CD8-positive, alpha-beta T cell (primary cell): ENCODE measurements at regions of chr9 and their contacts with region 1.

Region 1: DNA sequence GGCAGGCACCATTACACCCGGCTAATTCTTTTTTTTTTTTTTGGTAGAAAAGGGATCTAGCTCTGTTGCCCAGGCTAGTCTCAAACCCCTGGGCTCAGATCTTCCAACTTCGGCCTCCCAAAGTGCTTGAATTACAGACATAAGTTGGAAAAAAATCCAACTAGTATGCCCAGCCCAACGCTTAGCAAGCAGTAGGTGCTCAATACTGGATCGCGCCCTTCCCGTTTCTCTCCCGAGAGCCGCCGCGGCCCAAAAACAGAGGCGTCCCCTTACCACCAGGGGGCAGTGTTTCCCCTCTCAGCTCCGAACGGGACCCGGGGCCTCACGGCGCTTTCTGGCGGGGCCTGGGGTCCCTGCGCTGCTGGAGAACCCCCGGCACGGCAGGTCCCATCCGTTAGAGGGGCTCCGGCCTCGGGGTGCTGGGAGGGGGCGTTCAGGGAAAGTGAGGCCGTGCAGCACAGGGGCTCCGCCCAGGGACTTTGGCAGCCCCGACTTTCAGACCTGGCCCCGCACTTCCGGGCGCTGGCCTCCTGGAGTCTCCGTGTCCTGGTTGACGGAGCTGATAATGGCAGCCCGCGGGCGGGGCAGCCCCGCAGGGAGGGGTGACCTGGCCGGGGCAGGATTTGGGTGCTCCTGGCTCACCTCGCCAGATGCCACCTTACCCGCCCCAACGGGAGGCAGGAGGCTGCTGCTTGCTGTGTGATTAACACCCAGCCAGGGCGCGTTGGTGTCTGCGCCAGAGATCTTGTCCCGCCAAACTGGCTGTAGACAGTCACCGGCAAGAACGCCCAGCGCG is 15.2 kb downstream of the PTGES start:
- DNase-seq: peak; percentile 72 to 95 (median 87)
- ATAC-seq: peak; percentile 85
- H3K4me3 ChIP-seq: peak overlapping the region; percentile 72 to 92
- H3K4me3 Mint-ChIP-seq: peak overlapping the region; percentile 76
- H3K27ac ChIP-seq: peak overlapping the region; percentile 50 to 77
- H3K27ac Mint-ChIP-seq: peak overlapping the region; percentile 60
- H3K4me1 ChIP-seq: peaks cover 9% of the 10 kb centered on the region
- H3K4me1 Mint-ChIP-seq: peaks cover 6% of the 10 kb centered on the region
- H3K27me3 ChIP-seq: no peaks in the 10 kb centered on the region
- H3K27me3 Mint-ChIP-seq: peaks cover 2% of the 10 kb centered on the region
- CTCF ChIP-seq: peak; percentile 96

Region 2: GRCh38 chr9:129422843-129423192 is 314.9 kb before region 1 on chr9:
- CTCF ChIA-PET with region 1: no interaction called
- POLR2A ChIA-PET with region 1: no interaction called
- intact Hi-C with region 1: no loop called
- DNase-seq: peak in 1 of 9 experiments; percentile 37
- ATAC-seq: peak; percentile 42
- H3K4me3 ChIP-seq: no peak overlapping the region
- H3K4me3 Mint-ChIP-seq: no peak overlapping the region
- H3K27ac ChIP-seq: peak overlapping the region in 1 of 2 experiments; percentile 18
- H3K27ac Mint-ChIP-seq: no peak overlapping the region
- H3K4me1 ChIP-seq: peaks cover 15% of the 10 kb centered on the region
- H3K4me1 Mint-ChIP-seq: peaks cover 16% of the 10 kb centered on the region
- H3K27me3 ChIP-seq: no peaks in the 10 kb centered on the region
- H3K27me3 Mint-ChIP-seq: no peaks in the 10 kb centered on the region
- CTCF ChIP-seq: no peak

Region 3: DNA sequence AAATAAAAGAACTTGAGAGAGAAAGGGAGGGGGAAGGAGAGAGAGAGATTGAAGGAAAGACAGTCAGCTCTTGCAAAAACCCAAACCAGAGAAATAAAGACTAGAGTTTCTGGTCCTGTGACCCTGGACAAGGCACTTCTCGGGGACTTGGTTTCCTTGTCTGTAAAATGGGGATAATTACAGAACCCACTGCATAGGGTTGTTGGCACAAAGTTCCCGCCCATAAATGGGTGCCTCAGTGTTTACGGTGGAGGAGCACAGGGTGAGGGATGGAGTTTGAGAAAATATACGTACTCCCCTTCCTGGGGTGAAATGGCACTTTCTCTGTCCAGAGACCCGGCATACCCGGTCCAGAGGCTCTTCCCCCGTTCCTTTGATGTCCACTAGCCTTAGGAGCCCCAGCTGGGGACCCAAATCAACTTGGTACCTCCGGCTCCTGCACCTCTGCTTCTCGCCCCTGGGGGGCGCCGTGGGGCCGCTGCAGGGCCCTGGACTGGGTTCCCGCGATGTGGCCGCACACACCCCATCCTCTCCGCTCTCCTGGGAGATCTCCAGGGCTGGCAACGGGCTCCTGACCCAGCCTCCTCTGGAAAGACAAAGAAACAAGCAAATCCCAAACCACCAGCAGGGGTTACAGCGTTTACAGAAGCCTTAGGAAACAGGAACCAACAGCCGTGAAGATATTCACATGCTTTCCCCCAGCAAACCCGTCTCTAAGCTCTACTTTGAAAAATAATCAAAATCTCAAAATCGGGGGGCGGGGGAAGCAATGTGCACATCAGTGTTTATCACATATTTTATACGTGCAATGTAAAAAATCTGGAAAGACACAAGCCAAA is 11.1 kb before region 1 on chr9:
- CTCF ChIA-PET with region 1: interaction called, 52 read pairs
- POLR2A ChIA-PET with region 1: interaction called, 3 read pairs
- intact Hi-C with region 1: no loop called
- DNase-seq: peak; percentile 18 to 69 (median 55)
- ATAC-seq: peak; percentile 97
- H3K4me3 ChIP-seq: no peak overlapping the region
- H3K4me3 Mint-ChIP-seq: peak overlapping the region; percentile 50
- H3K27ac ChIP-seq: no peak overlapping the region
- H3K27ac Mint-ChIP-seq: no peak overlapping the region
- H3K4me1 ChIP-seq: peaks cover 6% of the 10 kb centered on the region
- H3K4me1 Mint-ChIP-seq: peaks cover 3% of the 10 kb centered on the region
- H3K27me3 ChIP-seq: no peaks in the 10 kb centered on the region
- H3K27me3 Mint-ChIP-seq: no peaks in the 10 kb centered on the region
- CTCF ChIP-seq: peak; percentile 86

Region 4: DNA sequence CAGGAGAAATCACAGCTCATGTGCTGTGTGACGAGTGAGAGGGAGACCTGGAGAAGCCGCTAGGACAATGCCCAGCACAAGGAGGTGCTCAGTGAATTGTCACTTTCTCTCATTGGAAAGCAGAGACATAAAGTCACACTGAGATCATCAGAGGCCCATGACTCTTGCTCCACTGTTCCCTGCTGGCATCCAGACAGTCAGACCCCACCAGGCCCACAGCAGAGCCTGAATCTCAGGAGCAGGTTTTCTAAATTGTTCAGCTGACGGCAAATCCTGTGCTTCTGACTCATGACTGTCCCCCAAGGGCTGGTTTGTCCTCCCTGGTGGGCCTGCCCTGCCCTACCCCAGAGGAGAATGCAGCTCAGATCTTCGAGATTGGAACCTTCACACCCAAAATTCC is 12.3 kb after region 1 on chr9:
- CTCF ChIA-PET with region 1: interaction called, 23 read pairs
- POLR2A ChIA-PET with region 1: interaction called, 3 read pairs
- intact Hi-C with region 1: no loop called
- DNase-seq: no peak
- ATAC-seq: no peak
- H3K4me3 ChIP-seq: no peak overlapping the region
- H3K4me3 Mint-ChIP-seq: no peak overlapping the region
- H3K27ac ChIP-seq: no peak overlapping the region
- H3K27ac Mint-ChIP-seq: no peak overlapping the region
- H3K4me1 ChIP-seq: peaks cover 9% of the 10 kb centered on the region
- H3K4me1 Mint-ChIP-seq: peaks cover 5% of the 10 kb centered on the region
- H3K27me3 ChIP-seq: peaks cover 0 to 2% of the 10 kb centered on the region in 2 experiments
- H3K27me3 Mint-ChIP-seq: no peaks in the 10 kb centered on the region
- CTCF ChIP-seq: no peak

Region 5: GRCh38 chr9:129776938-129777768 is 39.5 kb after region 1 on chr9:
- CTCF ChIA-PET with region 1: interaction called, 26 read pairs
- POLR2A ChIA-PET with region 1: interaction called, 3 read pairs
- intact Hi-C with region 1: no loop called
- DNase-seq: peak in 7 of 9 experiments; percentile 18 to 75 (median 57)
- ATAC-seq: peak; percentile 84
- H3K4me3 ChIP-seq: no peak overlapping the region
- H3K4me3 Mint-ChIP-seq: no peak overlapping the region
- H3K27ac ChIP-seq: no peak overlapping the region
- H3K27ac Mint-ChIP-seq: no peak overlapping the region
- H3K4me1 ChIP-seq: peaks cover 11% of the 10 kb centered on the region
- H3K4me1 Mint-ChIP-seq: peaks cover 10% of the 10 kb centered on the region
- H3K27me3 ChIP-seq: no peaks in the 10 kb centered on the region
- H3K27me3 Mint-ChIP-seq: peaks cover 6% of the 10 kb centered on the region
- CTCF ChIP-seq: no peak

Region 6: DNA sequence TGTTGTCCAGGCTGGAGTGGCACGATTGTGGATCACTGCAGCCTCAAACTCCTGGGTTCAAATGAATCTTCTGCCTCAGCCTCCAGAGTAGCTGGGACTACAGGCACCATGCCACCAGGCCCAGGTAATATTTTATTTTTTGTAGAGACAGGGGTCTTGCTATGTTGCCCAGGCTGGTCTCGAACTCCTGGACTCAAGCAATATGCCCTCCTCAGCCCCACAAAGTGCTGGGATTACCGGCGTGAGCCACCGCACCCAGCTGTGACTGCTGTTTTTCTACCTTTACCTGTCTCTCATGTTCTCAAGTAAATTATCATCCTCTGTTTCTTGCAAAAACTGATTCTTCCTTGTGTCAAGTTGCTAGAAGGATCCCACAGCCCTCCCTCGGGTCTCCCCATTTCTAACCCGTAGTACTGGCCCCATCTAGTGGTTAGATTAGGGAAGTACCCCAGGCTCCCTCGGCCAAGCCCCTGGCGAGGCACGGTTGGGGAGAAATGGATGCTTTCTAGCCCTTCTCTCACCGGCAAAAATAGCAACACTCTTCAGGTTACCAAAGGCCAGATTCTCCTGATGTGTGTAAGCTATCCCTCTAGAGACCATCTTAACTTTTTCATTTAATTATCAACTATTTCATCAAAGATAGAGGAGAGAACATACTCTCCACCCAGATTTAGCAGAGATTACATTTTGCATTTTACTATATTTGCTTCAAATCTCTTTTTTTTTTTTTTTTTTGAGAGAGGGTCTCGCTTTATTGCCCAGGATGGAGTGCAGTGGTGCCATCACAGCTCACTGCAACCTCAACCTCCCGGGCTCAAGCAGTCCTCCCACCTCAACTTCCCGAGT is 46.1 kb after region 1 on chr9:
- CTCF ChIA-PET with region 1: interaction called, 71 read pairs
- POLR2A ChIA-PET with region 1: interaction called, 3 read pairs
- intact Hi-C with region 1: loop called (anchors 1 kb)
- DNase-seq: peak; percentile 55 to 81 (median 73)
- ATAC-seq: peak; percentile 100
- H3K4me3 ChIP-seq: no peak overlapping the region
- H3K4me3 Mint-ChIP-seq: no peak overlapping the region
- H3K27ac ChIP-seq: no peak overlapping the region
- H3K27ac Mint-ChIP-seq: no peak overlapping the region
- H3K4me1 ChIP-seq: no peaks in the 10 kb centered on the region
- H3K4me1 Mint-ChIP-seq: peaks cover 4% of the 10 kb centered on the region
- H3K27me3 ChIP-seq: peaks cover 0 to 3% of the 10 kb centered on the region in 2 experiments
- H3K27me3 Mint-ChIP-seq: peaks cover 5% of the 10 kb centered on the region
- CTCF ChIP-seq: peak; percentile 84

Region 7: GRCh38 chr9:129796029-129796910 is 58.6 kb after region 1 on chr9:
- CTCF ChIA-PET with region 1: interaction called, 20 read pairs
- POLR2A ChIA-PET with region 1: no interaction called
- intact Hi-C with region 1: no loop called
- DNase-seq: no peak
- ATAC-seq: no peak
- H3K4me3 ChIP-seq: no peak overlapping the region
- H3K4me3 Mint-ChIP-seq: no peak overlapping the region
- H3K27ac ChIP-seq: no peak overlapping the region
- H3K27ac Mint-ChIP-seq: no peak overlapping the region
- H3K4me1 ChIP-seq: no peaks in the 10 kb centered on the region
- H3K4me1 Mint-ChIP-seq: no peaks in the 10 kb centered on the region
- H3K27me3 ChIP-seq: no peaks in the 10 kb centered on the region
- H3K27me3 Mint-ChIP-seq: no peaks in the 10 kb centered on the region
- CTCF ChIP-seq: no peak

Region 8: GRCh38 chr9:130235897-130236668 is 498.4 kb after region 1 on chr9:
- CTCF ChIA-PET with region 1: no interaction called
- POLR2A ChIA-PET with region 1: no interaction called
- intact Hi-C with region 1: loop called (anchors 5 kb)
- DNase-seq: peak; percentile 53 to 85 (median 70)
- ATAC-seq: peak; percentile 66
- H3K4me3 ChIP-seq: no peak overlapping the region
- H3K4me3 Mint-ChIP-seq: peak overlapping the region; percentile 42
- H3K27ac ChIP-seq: no peak overlapping the region
- H3K27ac Mint-ChIP-seq: no peak overlapping the region
- H3K4me1 ChIP-seq: peaks cover 5% of the 10 kb centered on the region
- H3K4me1 Mint-ChIP-seq: peaks cover 8% of the 10 kb centered on the region
- H3K27me3 ChIP-seq: no peaks in the 10 kb centered on the region
- H3K27me3 Mint-ChIP-seq: no peaks in the 10 kb centered on the region
- CTCF ChIP-seq: peak; percentile 98